Mammary epithelial cell (primary cell): ENCODE measurements at regions of chr17 and their contacts with region 1.

Region 1: GRCh38 chr17:30477083-30477773 is at the start of gene GOSR1:
- DNase-seq: peak; percentile 90
- H3K4me3 ChIP-seq: peak within 1 kb of the TSS; percentile 81 to 99 (median 86)
- H3K27ac ChIP-seq: peak within 1 kb of the TSS; percentile 91
- H3K4me1 ChIP-seq: peaks cover 17% of the 10 kb centered on the region
- H3K27me3 ChIP-seq: no peaks in the 10 kb centered on the region
- CTCF ChIP-seq: peak; percentile 59 to 79
- total RNA-seq, gene GOSR1: 27.8 to 54.6 TPM

Region 2: DNA sequence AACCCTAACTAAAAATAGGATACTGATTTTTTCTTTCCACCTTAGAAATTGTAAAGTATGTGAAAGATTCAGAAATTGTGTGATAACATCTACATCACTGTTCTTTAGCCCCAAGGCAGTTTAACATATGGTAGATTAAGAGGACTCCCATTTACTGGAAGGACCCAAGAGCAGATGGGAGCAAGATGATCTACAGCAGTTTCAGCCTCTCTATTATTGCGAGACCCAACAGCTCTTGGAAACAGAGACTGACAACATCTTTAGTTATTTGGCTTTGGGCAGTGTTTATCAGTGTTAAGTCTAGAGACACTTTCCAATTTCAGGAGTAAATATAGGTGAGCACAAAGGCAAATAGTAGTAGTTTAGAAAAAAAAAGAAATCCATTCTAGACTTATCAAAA is 729.6 kb before region 1 on chr17:
- CTCF ChIA-PET with region 1: no interaction called
- dilution Hi-C with region 1: no loop called
- in situ Hi-C with region 1: no loop called
- intact Hi-C with region 1: no loop called
- DNase-seq: no peak
- H3K4me3 ChIP-seq: no peak overlapping the region
- H3K27ac ChIP-seq: no peak overlapping the region
- H3K4me1 ChIP-seq: peaks cover 18% of the 10 kb centered on the region
- H3K27me3 ChIP-seq: no peaks in the 10 kb centered on the region
- CTCF ChIP-seq: no peak

Region 3: DNA sequence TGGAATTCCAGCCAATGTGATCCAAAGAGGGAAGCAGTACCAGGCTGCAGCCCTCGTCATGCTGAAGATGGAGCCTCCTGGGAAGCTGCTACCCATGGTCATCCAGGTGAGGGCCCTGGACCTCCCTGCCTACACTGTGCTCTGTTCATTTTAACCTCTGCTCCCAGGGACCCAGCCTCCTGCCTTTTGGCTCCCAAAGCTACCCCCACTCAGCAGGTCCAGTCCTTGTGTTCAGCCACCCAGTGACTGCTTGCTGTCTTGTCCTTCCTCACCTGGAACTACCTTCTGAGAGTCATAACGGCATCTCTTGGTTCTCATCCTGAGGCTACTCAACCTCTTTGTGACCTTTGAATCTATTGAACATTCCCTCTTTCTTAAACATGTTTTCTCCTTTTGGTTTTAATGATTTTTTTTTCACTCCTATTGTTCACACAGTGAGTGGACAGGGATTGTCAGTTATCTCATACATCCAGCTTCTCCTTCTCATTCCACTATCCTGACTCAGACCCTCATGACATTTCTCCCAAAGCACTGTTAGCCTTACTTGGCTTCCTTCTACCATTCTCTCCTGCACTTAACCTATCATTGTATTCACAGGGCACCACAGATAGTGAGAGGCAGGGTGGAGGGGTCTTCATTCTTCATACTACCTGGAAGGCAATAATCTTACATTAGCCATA is 53.3 kb after region 1 on chr17:
- CTCF ChIA-PET with region 1: no interaction called
- dilution Hi-C with region 1: no loop called
- in situ Hi-C with region 1: no loop called
- intact Hi-C with region 1: no loop called
- DNase-seq: no peak
- H3K4me3 ChIP-seq: no peak overlapping the region
- H3K27ac ChIP-seq: no peak overlapping the region
- H3K4me1 ChIP-seq: no peaks in the 10 kb centered on the region
- H3K27me3 ChIP-seq: no peaks in the 10 kb centered on the region
- CTCF ChIP-seq: no peak

Region 4: GRCh38 chr17:30600049-30600829 is 123.0 kb after region 1 on chr17:
- CTCF ChIA-PET with region 1: no interaction called
- dilution Hi-C with region 1: no loop called
- in situ Hi-C with region 1: no loop called
- intact Hi-C with region 1: loop called (anchors 1 kb)
- DNase-seq: peak; percentile 86
- H3K4me3 ChIP-seq: peak overlapping the region; percentile 75 to 96 (median 90)
- H3K27ac ChIP-seq: peak overlapping the region; percentile 57
- H3K4me1 ChIP-seq: no peaks in the 10 kb centered on the region
- H3K27me3 ChIP-seq: no peaks in the 10 kb centered on the region
- CTCF ChIP-seq: peak; percentile 42 to 71

Region 5: DNA sequence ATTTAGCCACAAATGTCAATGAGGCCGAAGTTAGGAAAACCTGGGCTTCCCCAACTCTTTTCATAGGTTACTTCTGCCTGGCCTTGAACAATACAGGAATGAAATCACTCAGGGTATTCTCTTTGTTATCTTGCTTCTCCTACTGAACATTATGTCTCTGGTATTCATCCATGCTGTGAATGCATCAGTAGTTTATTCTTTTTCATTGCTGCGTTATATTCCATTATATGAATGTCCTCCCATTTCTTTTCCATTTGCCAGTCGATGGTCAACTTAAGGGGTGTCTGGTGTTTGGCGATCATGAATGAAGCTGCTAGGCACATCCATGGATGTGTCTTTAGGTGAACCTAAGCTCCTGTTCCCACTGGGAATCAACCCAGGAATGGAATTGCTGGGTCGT is 219.0 kb after region 1 on chr17:
- CTCF ChIA-PET with region 1: no interaction called
- dilution Hi-C with region 1: no loop called
- in situ Hi-C with region 1: no loop called
- intact Hi-C with region 1: loop called (anchors 5 kb)
- DNase-seq: no peak
- H3K4me3 ChIP-seq: no peak overlapping the region
- H3K27ac ChIP-seq: no peak overlapping the region
- H3K4me1 ChIP-seq: no peaks in the 10 kb centered on the region
- H3K27me3 ChIP-seq: no peaks in the 10 kb centered on the region
- CTCF ChIP-seq: no peak

Region 6: DNA sequence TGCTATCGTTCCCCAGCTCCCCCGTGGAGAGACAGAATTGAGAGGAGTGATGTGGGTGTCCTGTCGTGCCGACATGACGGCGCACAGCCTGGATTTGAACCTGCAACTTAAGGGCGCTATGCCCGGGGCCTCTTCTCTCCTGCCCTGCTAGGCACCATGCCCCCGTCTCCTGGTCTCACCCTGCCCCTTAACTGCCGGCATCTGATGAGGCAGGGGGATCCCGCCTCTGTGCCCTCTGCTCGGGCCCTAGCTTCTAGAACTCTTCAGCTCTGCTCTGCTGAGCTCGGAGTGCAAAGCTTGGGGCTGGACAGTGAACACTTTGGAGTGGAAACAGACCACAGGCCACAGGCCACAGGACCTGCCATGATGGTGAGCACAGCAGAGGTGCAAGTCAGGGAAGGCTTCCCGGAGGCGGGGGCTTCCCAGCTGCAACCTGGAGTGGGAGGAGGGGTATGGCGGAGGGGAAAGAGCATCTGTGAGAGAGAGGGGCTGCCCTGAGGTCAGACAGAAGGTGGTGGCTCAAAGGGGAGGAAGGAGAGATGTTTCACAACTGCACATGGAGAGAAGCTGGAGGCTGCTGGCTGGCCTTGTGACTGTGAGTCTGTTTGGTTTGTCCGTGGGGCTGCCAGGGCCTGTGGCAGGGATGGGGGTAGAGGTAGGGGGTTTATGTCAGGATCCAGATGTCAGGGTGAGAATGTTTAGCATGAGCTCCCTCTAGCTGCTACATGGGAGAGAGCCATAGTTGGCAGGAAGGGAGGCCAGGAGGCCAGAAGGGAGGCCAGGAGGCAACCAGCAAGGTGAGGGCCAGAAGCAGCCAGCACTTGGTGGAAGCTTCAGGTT is 239.5 kb after region 1 on chr17:
- CTCF ChIA-PET with region 1: no interaction called
- dilution Hi-C with region 1: no loop called
- in situ Hi-C with region 1: no loop called
- intact Hi-C with region 1: loop called (anchors 5 kb)
- DNase-seq: no peak
- H3K4me3 ChIP-seq: no peak overlapping the region
- H3K27ac ChIP-seq: no peak overlapping the region
- H3K4me1 ChIP-seq: no peaks in the 10 kb centered on the region
- H3K27me3 ChIP-seq: no peaks in the 10 kb centered on the region
- CTCF ChIP-seq: peak in 1 of 2 donors; percentile 23

Region 7: DNA sequence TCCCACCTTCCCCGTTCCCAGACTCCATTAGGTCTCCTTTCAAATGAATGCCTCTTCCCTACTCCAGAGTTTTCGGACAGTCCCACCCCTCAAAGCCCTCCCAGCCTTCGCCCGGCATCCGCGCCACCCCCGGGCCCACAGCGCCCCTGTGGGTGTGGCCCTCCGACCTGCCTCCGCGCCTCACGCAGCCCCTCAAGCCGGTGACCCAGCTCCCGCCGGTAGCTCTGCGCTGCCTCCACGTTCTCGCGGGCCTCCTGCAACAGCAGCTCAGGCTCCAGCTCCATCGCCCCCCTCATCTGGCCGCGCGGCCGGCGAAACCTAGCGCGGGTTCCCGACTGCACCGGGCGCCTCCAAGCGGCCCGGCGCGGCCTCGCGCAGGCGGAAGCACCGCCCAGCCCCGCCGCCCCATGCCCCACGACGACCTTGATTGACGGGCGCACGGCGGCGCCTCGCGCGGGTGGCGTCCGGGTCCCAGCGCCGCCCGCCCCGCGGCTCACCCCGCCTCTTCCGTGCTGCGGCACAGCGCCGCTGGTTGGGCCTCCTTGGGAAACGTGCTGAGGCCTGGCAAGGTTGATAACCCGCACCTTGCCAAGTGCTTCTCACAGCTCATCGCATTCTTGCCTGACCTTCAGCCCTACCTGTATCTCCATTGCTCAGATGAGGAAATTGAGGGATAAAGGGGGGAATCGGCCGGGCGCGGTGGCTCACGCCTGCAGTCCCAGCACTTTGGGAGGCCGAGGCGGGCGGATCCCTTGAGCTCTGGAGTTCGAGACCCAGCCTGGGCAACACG is 347.3 kb after region 1 on chr17 and contains the start of gene CRLF3:
- CTCF ChIA-PET with region 1: no interaction called
- dilution Hi-C with region 1: no loop called
- in situ Hi-C with region 1: no loop called
- intact Hi-C with region 1: loop called (anchors 10 kb)
- DNase-seq: peak; percentile 92
- H3K4me3 ChIP-seq: peak within 1 kb of the TSS; percentile 81 to 94 (median 86)
- H3K27ac ChIP-seq: peak within 1 kb of the TSS; percentile 49
- H3K4me1 ChIP-seq: peaks cover 16% of the 10 kb centered on the region
- H3K27me3 ChIP-seq: no peaks in the 10 kb centered on the region
- CTCF ChIP-seq: peak; percentile 30 to 51
- total RNA-seq, gene CRLF3: 18.7 to 20.7 TPM